Ovary (tissue), 10 donors: ENCODE measurements at regions of chr14 and their contacts with region 1.

Region 1: GRCh38 chr14:58199726-58200479 is at the start of gene ACTR10:
- DNase-seq: peak; percentile 82 to 93 (median 89)
- H3K4me3 ChIP-seq: peak within 1 kb of the TSS; percentile 91
- H3K27ac ChIP-seq: peak within 1 kb of the TSS; percentile 91 to 96
- H3K4me1 ChIP-seq: peaks cover 2% of the 10 kb centered on the region
- H3K27me3 ChIP-seq: no peaks in the 10 kb centered on the region
- CTCF ChIP-seq: no peak
- EP300 ChIP-seq: no peak
- POLR2A ChIP-seq: peak; percentile 32
- total RNA-seq, gene ACTR10: 54.1 to 87.3 (median 71.2) TPM

Region 2: DNA sequence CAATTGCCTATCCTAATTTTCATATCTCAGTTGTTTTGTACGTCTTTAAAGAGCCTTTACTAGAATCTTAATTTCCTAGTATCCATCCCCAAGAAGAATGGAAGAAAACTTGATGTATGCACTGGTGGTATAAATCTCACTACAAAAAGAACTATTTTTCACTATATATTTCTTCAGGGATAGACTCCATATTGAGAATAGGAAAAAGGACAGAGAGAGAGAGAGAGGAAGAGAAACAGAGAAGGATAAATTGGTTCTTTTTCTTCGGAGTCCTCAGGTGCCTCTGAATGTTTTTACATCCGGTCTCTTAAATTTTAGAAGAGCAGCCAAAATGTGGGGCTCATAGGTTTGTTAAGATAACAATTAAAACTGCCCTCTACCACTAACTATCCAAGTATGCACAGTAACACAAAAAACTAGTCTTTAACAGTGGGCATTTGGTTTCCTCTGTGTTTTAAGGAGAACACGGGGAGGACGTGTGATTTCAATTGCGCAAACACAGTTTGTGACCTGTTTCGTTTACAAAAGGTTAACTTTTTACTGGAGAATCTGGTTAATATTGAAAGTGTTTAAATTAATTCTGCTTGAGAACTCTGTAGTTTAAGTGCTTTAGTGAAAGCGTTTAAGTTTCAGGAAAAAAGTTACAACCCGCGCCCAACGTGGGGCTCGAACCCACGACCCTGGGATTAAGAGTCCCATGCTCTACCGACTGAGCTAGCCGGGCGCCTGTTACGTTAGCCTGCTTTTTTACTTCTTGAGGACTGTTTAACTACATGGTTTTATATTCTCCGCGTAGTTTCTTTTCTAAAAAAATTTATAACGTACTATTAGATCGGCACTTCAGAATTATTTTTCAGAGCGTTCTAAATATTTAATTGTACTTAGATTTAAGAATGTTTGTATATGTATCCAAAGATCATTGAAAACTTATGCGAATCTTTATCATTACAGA is 39.6 kb after region 1 on chr14:
- intact Hi-C with region 1: loop called in 2 of 4 experiments (anchors 2 kb)
- DNase-seq: peak; percentile 66 to 86 (median 83)
- H3K4me3 ChIP-seq: peak overlapping the region; percentile 59
- H3K27ac ChIP-seq: peak overlapping the region; percentile 58 to 74
- H3K4me1 ChIP-seq: peaks cover 3% of the 10 kb centered on the region
- H3K27me3 ChIP-seq: no peaks in the 10 kb centered on the region
- CTCF ChIP-seq: no peak
- EP300 ChIP-seq: no peak
- POLR2A ChIP-seq: peak; percentile 28

Region 3: DNA sequence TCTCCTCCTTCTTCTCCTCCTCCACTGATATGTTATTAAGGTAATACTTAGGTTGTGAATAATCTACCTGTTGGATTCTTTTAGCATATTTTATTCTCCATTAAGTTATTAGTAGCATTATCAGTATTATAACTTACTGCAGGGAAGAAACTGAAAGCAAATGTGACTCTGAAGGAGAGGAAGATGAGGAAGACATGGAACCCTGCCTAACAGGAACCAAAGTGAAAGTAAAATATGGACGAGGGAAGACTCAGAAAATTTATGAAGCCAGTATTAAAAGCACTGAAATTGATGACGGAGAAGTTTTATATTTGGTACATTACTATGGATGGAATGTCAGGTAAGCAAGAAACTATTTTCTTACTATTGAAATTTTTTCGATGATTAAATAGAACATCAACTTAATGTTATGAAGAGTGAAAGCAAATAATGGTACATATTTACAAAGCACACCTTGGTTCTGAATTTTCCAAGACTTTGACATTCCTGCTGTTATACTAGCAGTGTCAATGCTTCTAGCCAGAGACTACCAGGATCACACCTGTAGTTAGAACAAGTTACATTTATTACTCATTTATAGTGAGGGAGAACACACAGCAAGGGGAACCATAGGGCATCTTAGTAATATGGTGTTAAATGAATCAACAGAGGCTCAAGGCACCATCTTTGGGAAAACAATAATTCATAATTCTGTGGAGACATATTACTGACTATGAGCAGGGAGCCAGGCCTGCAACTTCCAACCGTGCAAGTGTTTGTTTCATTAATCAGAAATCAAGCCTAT is 153.8 kb after region 1 on chr14:
- intact Hi-C with region 1: no loop called
- DNase-seq: no peak
- H3K4me3 ChIP-seq: peak overlapping the region; percentile 7
- H3K27ac ChIP-seq: no peak overlapping the region
- H3K4me1 ChIP-seq: no peaks in the 10 kb centered on the region
- H3K27me3 ChIP-seq: no peaks in the 10 kb centered on the region
- CTCF ChIP-seq: no peak
- EP300 ChIP-seq: no peak
- POLR2A ChIP-seq: no peak